ENCODE measurements at regions of chr19 and their contacts with region 1.

Region 1: DNA sequence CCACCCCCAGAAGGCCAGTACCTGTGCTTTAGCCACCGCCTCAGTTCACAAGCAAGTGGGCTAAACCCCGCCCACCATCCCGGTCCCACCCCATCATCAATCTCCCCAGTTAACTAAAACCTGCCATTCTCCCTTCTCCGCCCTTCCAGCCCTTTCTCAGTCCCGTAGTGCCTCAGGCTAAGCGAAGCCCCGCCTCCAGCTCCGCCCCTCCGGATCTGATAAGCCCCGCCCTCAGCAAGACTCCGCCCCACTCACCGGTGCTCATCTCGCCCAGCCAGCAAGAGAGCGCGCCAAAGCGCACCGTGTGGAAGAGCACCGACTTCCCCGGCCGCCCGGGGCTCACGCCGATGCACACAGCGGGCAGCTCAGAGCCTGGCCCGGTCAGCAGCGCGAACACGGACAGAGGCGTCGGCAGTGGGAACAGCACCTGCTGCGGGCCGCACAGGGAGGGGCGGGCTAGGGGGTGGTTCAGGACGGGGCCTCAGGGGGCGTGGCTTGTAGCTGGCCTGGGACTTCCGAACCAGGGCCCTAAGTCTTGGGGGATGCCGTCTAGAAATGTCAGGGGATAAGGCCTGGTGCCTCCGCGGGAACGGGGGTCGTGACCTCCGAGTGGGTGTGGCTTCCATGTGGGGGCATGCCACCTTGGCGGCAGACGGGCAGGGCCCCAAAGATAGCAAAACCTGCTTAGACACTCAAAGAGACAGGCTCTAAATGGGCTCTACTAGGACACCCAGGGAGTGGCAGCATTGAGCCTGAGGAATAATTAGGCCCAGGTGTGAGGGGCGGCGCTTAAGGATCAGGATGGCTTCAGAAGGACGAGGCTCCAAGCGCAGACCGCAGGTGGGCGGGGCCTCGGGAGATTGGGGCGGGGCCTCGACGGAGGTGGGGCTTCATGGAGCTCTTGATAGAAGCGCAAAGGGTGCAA is 21.4 kb downstream of the MAP4K1 start:
- DNase-seq: peak; percentile 52
- H3K4me3 ChIP-seq: peak overlapping the region in 1 of 4 donors; percentile 11
- H3K27ac ChIP-seq: no peak overlapping the region
- H3K4me1 ChIP-seq: peaks cover 3 to 8% (median 6%) of the 10 kb centered on the region in 4 donors
- H3K27me3 ChIP-seq: no peaks in the 10 kb centered on the region
- CTCF ChIP-seq: no peak
- EP300 ChIP-seq: no peak
- POLR2A ChIP-seq: no peak

Region 2: GRCh38 chr19:38455031-38455430 is 141.3 kb before region 1 on chr19:
- in situ Hi-C with region 1: no loop called
- intact Hi-C with region 1: loop called (anchors 5 kb)
- DNase-seq: no peak
- H3K4me3 ChIP-seq: no peak overlapping the region
- H3K27ac ChIP-seq: no peak overlapping the region
- H3K4me1 ChIP-seq: no peaks in the 10 kb centered on the region
- H3K27me3 ChIP-seq: no peaks in the 10 kb centered on the region
- CTCF ChIP-seq: no peak
- EP300 ChIP-seq: no peak
- POLR2A ChIP-seq: no peak

Region 3: GRCh38 chr19:38580080-38580479 is 16.2 kb before region 1 on chr19:
- in situ Hi-C with region 1: no loop called
- intact Hi-C with region 1: loop called (anchors 1 kb)
- DNase-seq: no peak
- H3K4me3 ChIP-seq: no peak overlapping the region
- H3K27ac ChIP-seq: no peak overlapping the region
- H3K4me1 ChIP-seq: no peaks in the 10 kb centered on the region
- H3K27me3 ChIP-seq: no peaks in the 10 kb centered on the region
- CTCF ChIP-seq: no peak
- EP300 ChIP-seq: no peak
- POLR2A ChIP-seq: no peak

Region 4: DNA sequence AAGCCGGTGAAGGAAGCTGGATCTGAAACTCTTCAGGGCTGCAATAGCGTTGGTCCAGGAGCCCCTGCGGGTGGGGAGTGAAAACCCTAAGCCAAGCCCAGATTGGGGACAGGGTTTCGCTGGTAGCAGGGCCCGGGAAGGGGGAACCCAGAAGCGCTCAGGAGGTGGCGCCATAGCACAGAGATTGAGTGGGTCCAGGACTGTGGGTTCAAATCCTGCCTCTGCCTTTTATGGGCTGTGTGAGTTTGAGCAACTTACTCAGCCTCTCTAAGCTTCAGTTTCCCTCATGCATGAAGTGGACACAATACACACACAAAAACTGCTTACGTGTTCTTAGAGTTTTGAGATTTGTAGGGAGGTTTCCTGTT is 616.0 kb after region 1 on chr19:
- in situ Hi-C with region 1: loop called in 1 of 4 experiments (anchors 25 kb)
- intact Hi-C with region 1: no loop called
- DNase-seq: peak; percentile 26
- H3K4me3 ChIP-seq: no peak overlapping the region
- H3K27ac ChIP-seq: no peak overlapping the region
- H3K4me1 ChIP-seq: no peaks in the 10 kb centered on the region
- H3K27me3 ChIP-seq: peaks cover 16% of the 10 kb centered on the region
- CTCF ChIP-seq: peak in 2 of 5 experiments; percentile 16 to 20
- EP300 ChIP-seq: no peak
- POLR2A ChIP-seq: no peak